ENCODE measurements at regions of chr6 and their contacts with region 1.

Region 1: DNA sequence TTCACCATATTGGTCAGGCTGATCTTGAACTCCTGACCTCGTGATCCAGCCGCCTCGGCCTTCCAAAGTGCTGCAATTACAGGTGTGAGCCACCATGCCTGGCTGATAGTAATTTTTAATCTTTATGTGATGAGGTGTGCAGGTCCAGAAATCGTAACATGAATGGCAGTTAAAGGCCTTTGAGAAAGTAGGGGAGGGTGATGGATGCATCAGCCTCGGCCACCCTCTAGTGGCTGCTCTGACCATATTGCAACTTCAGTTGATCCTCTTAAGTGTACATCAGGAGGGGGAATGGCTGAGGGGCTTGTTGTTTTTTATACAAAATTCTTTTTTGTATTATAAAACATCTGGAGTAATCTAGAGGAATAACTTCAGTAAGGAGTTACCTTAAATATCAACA is 193.0 kb downstream of the ZFAND3 start:
- DNase-seq: peak in 4 of 9 donors; percentile 3 to 15 (median 12)
- ATAC-seq: peak; percentile 61
- H3K4me3 ChIP-seq: no peak overlapping the region
- H3K4me3 Mint-ChIP-seq: no peak overlapping the region
- H3K27ac ChIP-seq: no peak overlapping the region
- H3K27ac Mint-ChIP-seq: no peak overlapping the region
- H3K4me1 ChIP-seq: no peaks in the 10 kb centered on the region
- H3K4me1 Mint-ChIP-seq: peaks cover 9 to 50% (median 25%) of the 10 kb centered on the region in 7 donors
- H3K27me3 ChIP-seq: no peaks in the 10 kb centered on the region
- H3K27me3 Mint-ChIP-seq: no peaks in the 10 kb centered on the region

Region 2: DNA sequence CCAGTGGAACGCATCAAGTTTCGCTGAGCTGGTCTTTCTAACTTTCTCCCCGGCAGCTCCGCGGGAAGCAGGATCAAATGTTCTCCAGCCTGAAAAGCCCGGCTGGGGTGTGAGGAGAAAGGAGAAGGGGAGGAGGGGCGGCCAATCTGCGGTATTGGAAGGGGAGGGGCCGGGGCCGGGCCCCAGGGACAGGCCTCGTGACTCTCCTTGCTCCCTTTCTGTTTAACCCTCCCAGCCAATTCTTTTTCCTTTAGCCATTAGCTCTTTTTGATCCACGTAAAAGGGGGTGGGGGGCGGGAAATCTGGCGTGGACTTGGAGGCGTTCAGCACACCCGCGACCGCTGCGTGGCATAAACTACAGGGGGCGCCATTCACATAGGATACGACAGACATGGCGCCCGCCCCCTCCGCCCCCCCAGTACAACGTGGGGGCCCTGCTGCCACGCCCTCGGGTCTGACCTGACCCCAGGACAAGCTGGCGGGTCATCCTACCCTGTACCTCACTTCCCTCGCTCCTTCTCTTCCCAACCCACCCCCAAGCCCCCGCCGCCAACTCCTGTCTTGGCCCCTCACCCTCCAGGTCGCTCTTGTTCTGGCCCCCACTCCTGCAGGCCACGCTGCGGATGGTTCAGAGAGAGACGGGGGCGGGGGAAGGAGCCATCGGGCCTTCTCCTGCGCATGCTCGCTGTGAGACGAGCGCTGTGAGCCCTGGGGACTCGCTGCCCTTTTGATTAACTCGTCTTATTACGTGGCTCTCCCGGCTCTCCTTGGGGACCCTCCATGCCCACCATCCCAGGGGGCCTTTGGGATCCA is 307.1 kb before region 1 on chr6:
- CTCF ChIA-PET with region 1: no interaction called
- POLR2A ChIA-PET with region 1: no interaction called
- intact Hi-C with region 1: loop called (anchors 1 to 5 kb)
- DNase-seq: peak; percentile 37 to 82 (median 78)
- ATAC-seq: peak; percentile 86
- H3K4me3 ChIP-seq: peak overlapping the region; percentile 60
- H3K4me3 Mint-ChIP-seq: peak overlapping the region; percentile 79 to 90 (median 86)
- H3K27ac ChIP-seq: peak overlapping the region; percentile 46
- H3K27ac Mint-ChIP-seq: peak overlapping the region; percentile 55 to 91 (median 82)
- H3K4me1 ChIP-seq: peaks cover 5 to 6% of the 10 kb centered on the region in 2 donors
- H3K4me1 Mint-ChIP-seq: peaks cover 10 to 17% (median 14%) of the 10 kb centered on the region in 7 donors
- H3K27me3 ChIP-seq: no peaks in the 10 kb centered on the region
- H3K27me3 Mint-ChIP-seq: peaks cover 0 to 39% (median 0%) of the 10 kb centered on the region in 5 donors

Region 3: DNA sequence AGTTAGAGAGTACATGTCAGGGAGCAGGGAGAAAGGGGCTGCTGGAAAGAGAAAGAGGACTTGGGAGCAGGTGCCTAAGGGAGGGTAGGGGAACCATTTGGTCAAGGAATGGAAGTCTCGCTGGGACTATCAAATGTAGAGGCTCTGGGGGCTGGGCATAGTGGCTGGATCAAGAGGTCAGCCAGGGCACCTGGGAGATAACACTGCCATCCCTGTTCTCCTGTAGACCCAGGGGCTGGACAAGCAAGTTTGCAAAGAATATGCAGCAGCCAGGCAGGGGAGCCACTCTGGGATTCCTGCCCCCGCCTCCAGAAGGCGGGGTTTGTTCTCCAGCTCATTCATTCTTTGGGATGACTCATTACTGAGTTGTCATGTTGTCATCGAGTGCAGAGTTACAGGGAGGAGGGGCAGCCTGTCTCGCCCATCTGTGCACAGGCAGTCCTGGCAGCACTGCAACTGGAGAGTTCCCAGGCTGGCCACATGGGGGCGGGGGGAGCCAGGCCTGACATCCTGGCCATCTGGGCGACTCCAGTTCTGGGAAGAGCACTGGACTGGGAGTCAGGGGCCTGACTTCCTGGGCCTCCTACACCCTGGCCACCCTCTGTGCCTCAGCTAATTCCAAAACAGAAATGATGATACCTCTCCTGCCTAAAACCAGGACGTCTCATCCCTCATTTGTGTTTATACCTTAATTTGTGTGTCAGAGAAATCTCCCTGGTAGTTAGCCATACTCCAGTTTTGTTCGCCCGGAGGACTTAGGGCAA is 221.2 kb before region 1 on chr6:
- CTCF ChIA-PET with region 1: interaction called, 3 read pairs
- POLR2A ChIA-PET with region 1: no interaction called
- intact Hi-C with region 1: loop called (anchors 1 to 5 kb)
- DNase-seq: peak; percentile 29 to 83 (median 59)
- ATAC-seq: peak; percentile 99
- H3K4me3 ChIP-seq: no peak overlapping the region
- H3K4me3 Mint-ChIP-seq: no peak overlapping the region
- H3K27ac ChIP-seq: no peak overlapping the region
- H3K27ac Mint-ChIP-seq: no peak overlapping the region
- H3K4me1 ChIP-seq: no peaks in the 10 kb centered on the region
- H3K4me1 Mint-ChIP-seq: peaks cover 0 to 11% (median 0%) of the 10 kb centered on the region in 7 donors
- H3K27me3 ChIP-seq: no peaks in the 10 kb centered on the region
- H3K27me3 Mint-ChIP-seq: peaks cover 0 to 10% (median 0%) of the 10 kb centered on the region in 5 donors

Region 4: GRCh38 chr6:38034274-38034914 is 21.8 kb after region 1 on chr6:
- CTCF ChIA-PET with region 1: no interaction called
- POLR2A ChIA-PET with region 1: no interaction called
- intact Hi-C with region 1: loop called in 1 of 2 experiments (anchors 2 kb)
- DNase-seq: peak in 1 of 9 donors; percentile 8
- ATAC-seq: no peak
- H3K4me3 ChIP-seq: no peak overlapping the region
- H3K4me3 Mint-ChIP-seq: peak overlapping the region in 6 of 10 donors; percentile 8 to 54 (median 23)
- H3K27ac ChIP-seq: no peak overlapping the region
- H3K27ac Mint-ChIP-seq: peak overlapping the region in 3 of 9 donors; percentile 29 to 57 (median 52)
- H3K4me1 ChIP-seq: peaks cover 0 to 12% of the 10 kb centered on the region in 2 donors
- H3K4me1 Mint-ChIP-seq: peaks cover 22 to 82% (median 61%) of the 10 kb centered on the region in 7 donors
- H3K27me3 ChIP-seq: no peaks in the 10 kb centered on the region
- H3K27me3 Mint-ChIP-seq: no peaks in the 10 kb centered on the region